PC-9 (cell line): ENCODE measurements at regions of chr7 and their contacts with region 1.

Region 1: GRCh38 chr7:96084881-96085551 is 236.9 kb downstream of the SLC25A13 start:
- DNase-seq: peak; percentile 41 to 91
- H3K4me3 ChIP-seq: no peak overlapping the region
- H3K27ac ChIP-seq: peak overlapping the region; percentile 70
- H3K4me1 ChIP-seq: peaks cover 34% of the 10 kb centered on the region
- H3K27me3 ChIP-seq: no peaks in the 10 kb centered on the region
- CTCF ChIP-seq: no peak

Region 2: DNA sequence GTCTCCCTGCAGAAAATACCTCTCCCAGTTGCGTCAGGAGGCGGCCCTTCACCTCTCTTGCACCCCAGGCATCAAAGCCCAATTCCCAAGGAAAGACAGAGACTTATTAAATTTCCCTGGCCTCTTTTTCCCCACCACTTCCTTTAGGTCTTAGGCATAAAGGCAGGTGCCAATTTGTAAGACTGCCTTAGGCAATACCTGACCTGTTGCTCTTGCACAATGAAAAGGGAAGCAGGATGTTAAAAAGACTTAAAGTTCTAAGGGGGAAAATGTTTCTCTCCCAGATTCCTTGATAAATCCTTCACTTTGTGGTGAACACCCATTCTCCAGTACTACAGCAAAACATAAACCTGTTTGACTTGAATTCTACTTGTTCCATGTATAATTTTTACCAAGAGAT is 50.3 kb after region 1 on chr7:
- CTCF ChIA-PET with region 1: no interaction called
- POLR2A ChIA-PET with region 1: interaction called, 7 read pairs
- intact Hi-C with region 1: loop called (anchors 1 kb)
- DNase-seq: peak; percentile 49 to 97
- H3K4me3 ChIP-seq: no peak overlapping the region
- H3K27ac ChIP-seq: peak overlapping the region; percentile 77
- H3K4me1 ChIP-seq: peaks cover 30% of the 10 kb centered on the region
- H3K27me3 ChIP-seq: no peaks in the 10 kb centered on the region
- CTCF ChIP-seq: no peak

Region 3: DNA sequence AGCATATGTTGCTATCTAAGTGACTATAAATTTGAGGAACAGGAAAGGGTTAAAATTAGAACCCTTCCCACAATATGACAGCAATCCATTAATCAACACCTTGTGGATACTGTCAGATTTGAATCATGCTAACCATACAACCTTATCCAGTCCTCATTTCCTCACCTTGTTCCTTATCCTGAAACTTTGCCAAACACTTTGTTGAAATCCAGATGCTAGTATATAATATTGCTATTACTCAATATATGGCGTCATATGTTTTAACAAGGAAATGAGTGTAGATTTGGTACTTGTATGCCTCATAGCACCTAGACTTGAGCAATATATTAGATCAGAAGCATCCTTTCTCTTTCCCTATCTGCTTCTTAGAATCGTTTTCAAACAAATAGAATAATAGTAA is 303.1 kb after region 1 on chr7:
- CTCF ChIA-PET with region 1: no interaction called
- POLR2A ChIA-PET with region 1: no interaction called
- intact Hi-C with region 1: no loop called
- DNase-seq: peak in 1 of 2 experiments; percentile 83
- H3K4me3 ChIP-seq: no peak overlapping the region
- H3K27ac ChIP-seq: no peak overlapping the region
- H3K4me1 ChIP-seq: peaks cover 20% of the 10 kb centered on the region
- H3K27me3 ChIP-seq: no peaks in the 10 kb centered on the region
- CTCF ChIP-seq: no peak

Region 4: GRCh38 chr7:96709381-96710228 is 624.6 kb after region 1 on chr7 and contains the start of gene SEM1:
- CTCF ChIA-PET with region 1: no interaction called
- POLR2A ChIA-PET with region 1: no interaction called
- intact Hi-C with region 1: loop called (anchors 10 kb)
- DNase-seq: peak; percentile 78 to 81
- H3K4me3 ChIP-seq: peak within 1 kb of the TSS; percentile 77
- H3K27ac ChIP-seq: peak within 1 kb of the TSS; percentile 83
- H3K4me1 ChIP-seq: peaks cover 20% of the 10 kb centered on the region
- H3K27me3 ChIP-seq: no peaks in the 10 kb centered on the region
- CTCF ChIP-seq: no peak
- total RNA-seq, gene SEM1: 108 and 131 TPM in 2 replicates